H1 (cell line): ENCODE measurements at regions of chr11 and their contacts with region 1.

Region 1: DNA sequence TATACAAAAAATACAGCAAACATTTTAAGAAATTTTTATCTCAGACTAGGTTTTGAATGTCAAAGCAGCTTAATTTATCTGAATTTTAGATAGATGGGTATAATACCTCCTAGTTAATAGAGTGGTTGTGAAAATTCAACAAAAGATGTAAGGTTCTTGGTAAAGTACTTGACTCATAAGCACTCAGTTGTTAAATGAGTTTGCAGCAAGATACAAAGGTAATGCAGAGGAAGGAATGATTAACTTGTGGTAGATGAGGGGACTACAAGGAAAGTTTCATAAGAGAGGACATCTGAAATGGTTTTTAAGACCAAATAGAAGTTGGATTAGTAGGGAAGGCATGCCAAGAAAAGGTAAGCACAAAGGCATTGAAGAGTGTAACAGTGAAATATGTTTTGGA is 37.4 kb downstream of the PPME1 start:
- DNase-seq: no peak
- H3K4me3 ChIP-seq: no peak overlapping the region
- H3K27ac ChIP-seq: no peak overlapping the region
- H3K4me1 ChIP-seq: peaks cover 0 to 2% (median 0%) of the 10 kb centered on the region in 4 experiments; a peak in 2 of 7 replicates
- H3K27me3 ChIP-seq: no peaks in the 10 kb centered on the region
- CTCF ChIP-seq: no peak
- EP300 ChIP-seq: no peak
- POLR2A ChIP-seq: no peak
- RAD21 ChIP-seq: no peak

Region 2: DNA sequence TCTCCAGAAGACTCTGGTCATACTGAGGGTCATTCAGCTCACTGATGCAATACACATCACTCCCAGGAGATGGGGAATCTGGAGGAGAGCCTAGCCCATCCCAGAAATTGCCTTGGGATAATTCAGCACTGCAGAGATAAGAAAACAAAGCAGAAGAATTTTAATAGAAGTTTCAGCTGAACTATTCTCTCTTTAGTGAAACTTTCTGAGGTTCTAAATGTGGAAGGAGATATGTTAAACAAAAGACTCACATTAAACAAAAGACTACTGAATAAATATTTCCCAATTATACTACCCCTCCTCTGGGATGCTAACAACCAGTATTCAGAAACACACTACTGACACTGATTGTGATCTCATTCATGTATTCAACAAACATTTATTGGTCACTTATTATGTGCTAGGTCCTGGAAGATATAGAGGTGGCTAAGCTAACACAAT is 85.5 kb before region 1 on chr11:
- CTCF ChIA-PET with region 1: no interaction called
- POLR2A ChIA-PET with region 1: no interaction called
- DNase-seq: no peak
- H3K4me3 ChIP-seq: no peak overlapping the region
- H3K27ac ChIP-seq: no peak overlapping the region
- H3K4me1 ChIP-seq: no peaks in the 10 kb centered on the region
- H3K27me3 ChIP-seq: no peaks in the 10 kb centered on the region
- CTCF ChIP-seq: no peak
- EP300 ChIP-seq: no peak
- POLR2A ChIP-seq: no peak
- RAD21 ChIP-seq: no peak

Region 3: GRCh38 chr11:74162681-74163467 is 45.6 kb before region 1 on chr11:
- CTCF ChIA-PET with region 1: no interaction called
- POLR2A ChIA-PET with region 1: no interaction called
- DNase-seq: no peak
- H3K4me3 ChIP-seq: no peak overlapping the region
- H3K27ac ChIP-seq: no peak overlapping the region
- H3K4me1 ChIP-seq: no peaks in the 10 kb centered on the region
- H3K27me3 ChIP-seq: peaks cover 0 to 1% (median 0%) of the 10 kb centered on the region in 4 experiments; a peak in 1 of 7 replicates
- CTCF ChIP-seq: no peak
- EP300 ChIP-seq: no peak
- POLR2A ChIP-seq: no peak
- RAD21 ChIP-seq: no peak

Region 4: GRCh38 chr11:74195828-74196227 is 12.7 kb before region 1 on chr11:
- CTCF ChIA-PET with region 1: interaction called, 14 read pairs
- POLR2A ChIA-PET with region 1: interaction called, 5 read pairs
- DNase-seq: no peak
- H3K4me3 ChIP-seq: no peak overlapping the region
- H3K27ac ChIP-seq: no peak overlapping the region
- H3K4me1 ChIP-seq: no peaks in the 10 kb centered on the region
- H3K27me3 ChIP-seq: no peaks in the 10 kb centered on the region
- CTCF ChIP-seq: no peak
- EP300 ChIP-seq: no peak
- POLR2A ChIP-seq: no peak
- RAD21 ChIP-seq: no peak

Region 5: DNA sequence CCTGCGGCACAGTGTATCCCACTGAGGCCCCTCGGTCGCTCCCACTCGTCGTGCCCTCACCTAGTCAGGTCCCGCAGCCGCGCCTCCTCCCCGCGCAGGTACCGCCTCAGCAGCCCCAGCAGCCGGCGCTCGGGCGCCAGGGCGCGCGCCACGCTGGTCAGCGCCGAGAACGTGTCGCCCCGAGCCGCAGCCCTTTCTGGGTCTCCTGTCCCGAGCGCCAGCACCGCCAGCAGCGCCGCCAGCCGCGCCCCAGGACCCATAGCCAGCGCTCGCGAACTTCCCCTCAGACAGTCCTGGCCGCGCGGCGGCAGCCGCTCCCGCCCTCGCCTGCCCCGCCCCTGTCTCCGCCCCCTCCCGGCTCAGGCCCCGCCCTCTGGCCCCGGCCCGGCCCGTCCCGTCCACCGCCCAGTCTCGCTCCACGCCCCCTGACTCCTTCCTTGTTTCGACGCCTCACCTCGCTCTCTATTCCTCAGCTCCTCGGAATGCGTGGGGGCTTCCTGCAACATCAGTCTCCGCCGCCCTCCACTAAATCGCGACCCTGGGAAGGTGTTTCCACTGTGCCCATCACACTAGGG is 102.9 kb after region 1 on chr11 and contains the start of gene P4HA3:
- CTCF ChIA-PET with region 1: no interaction called
- POLR2A ChIA-PET with region 1: no interaction called
- DNase-seq: peak; percentile 31 to 92
- H3K4me3 ChIP-seq: peak within 1 kb of the TSS; percentile 13 to 59 (median 40)
- H3K27ac ChIP-seq: no peak within 1 kb of the TSS
- H3K4me1 ChIP-seq: peaks cover 0 to 8% (median 3%) of the 10 kb centered on the region in 4 experiments; a peak in 3 of 7 replicates
- H3K27me3 ChIP-seq: peaks cover 8 to 24% (median 16%) of the 10 kb centered on the region in 4 experiments
- CTCF ChIP-seq: peak in 1 of 3 experiments; percentile 17; a peak in 1 of 4 replicates
- EP300 ChIP-seq: no peak
- POLR2A ChIP-seq: no peak
- RAD21 ChIP-seq: peak in 1 of 2 experiments; percentile 19; a peak in 2 of 4 replicates
- total RNA-seq, gene P4HA3: not detected in 2 replicates